HepG2 (cell line): ENCODE measurements at regions of chr14 and their contacts with region 1.

Region 1: GRCh38 chr14:38867561-38868150 is 235.4 kb downstream of the SEC23A start:
- DNase-seq: peak; percentile 91
- ATAC-seq: peak; percentile 92
- H3K4me3 ChIP-seq: no peak overlapping the region
- H3K27ac ChIP-seq: no peak overlapping the region
- H3K4me1 ChIP-seq: peaks cover 19% of the 10 kb centered on the region
- H3K27me3 ChIP-seq: peaks cover 0 to 9% of the 10 kb centered on the region in 2 experiments; a peak in 2 of 5 replicates
- CTCF ChIP-seq: peak; percentile 98
- EP300 ChIP-seq: no peak
- POLR2A ChIP-seq: no peak
- RAD21 ChIP-seq: peak; percentile 84

Region 2: GRCh38 chr14:37903343-37904191 is 964.1 kb before region 1 on chr14:
- CTCF ChIA-PET with region 1: interaction called, 4 read pairs
- POLR2A ChIA-PET with region 1: no interaction called
- in situ Hi-C with region 1: loop called (anchors 10 kb)
- intact Hi-C with region 1: loop called (anchors 1 kb)
- DNase-seq: peak; percentile 75
- ATAC-seq: peak; percentile 90
- H3K4me3 ChIP-seq: peak overlapping the region in 2 of 3 experiments; percentile 1 to 29; a peak in 2 of 6 replicates
- H3K27ac ChIP-seq: no peak overlapping the region
- H3K4me1 ChIP-seq: peaks cover 8% of the 10 kb centered on the region
- H3K27me3 ChIP-seq: no peaks in the 10 kb centered on the region
- CTCF ChIP-seq: peak; percentile 79
- EP300 ChIP-seq: no peak
- POLR2A ChIP-seq: no peak
- RAD21 ChIP-seq: peak; percentile 69

Region 3: GRCh38 chr14:38197001-38197783 is 670.5 kb before region 1 on chr14:
- CTCF ChIA-PET with region 1: no interaction called
- POLR2A ChIA-PET with region 1: no interaction called
- in situ Hi-C with region 1: no loop called
- intact Hi-C with region 1: loop called (anchors 1 kb)
- DNase-seq: no peak
- ATAC-seq: peak; percentile 57; the same call in 2 of the 3 replicates
- H3K4me3 ChIP-seq: no peak overlapping the region
- H3K27ac ChIP-seq: no peak overlapping the region
- H3K4me1 ChIP-seq: no peaks in the 10 kb centered on the region
- H3K27me3 ChIP-seq: no peaks in the 10 kb centered on the region; a peak in 1 of 5 replicates
- CTCF ChIP-seq: peak; percentile 29; the same call in 1 of the 2 replicates
- EP300 ChIP-seq: no peak
- POLR2A ChIP-seq: no peak
- RAD21 ChIP-seq: no peak

Region 4: GRCh38 chr14:38605193-38606114 is 262.2 kb before region 1 on chr14:
- CTCF ChIA-PET with region 1: no interaction called
- POLR2A ChIA-PET with region 1: no interaction called
- in situ Hi-C with region 1: loop called (anchors 10 kb)
- intact Hi-C with region 1: loop called (anchors 1 kb)
- DNase-seq: peak; percentile 79
- ATAC-seq: peak; percentile 83
- H3K4me3 ChIP-seq: peak overlapping the region in 2 of 3 experiments; percentile 1 to 11; a peak in 2 of 6 replicates
- H3K27ac ChIP-seq: peak overlapping the region; percentile 14
- H3K4me1 ChIP-seq: peaks cover 24% of the 10 kb centered on the region
- H3K27me3 ChIP-seq: no peaks in the 10 kb centered on the region
- CTCF ChIP-seq: peak; percentile 56
- EP300 ChIP-seq: peak in 1 of 2 experiments; percentile 92; a peak in 2 of 4 replicates
- POLR2A ChIP-seq: no peak
- RAD21 ChIP-seq: peak; percentile 10; the same call in 1 of the 2 replicates

Region 5: GRCh38 chr14:38848243-38848935 is 19.3 kb before region 1 on chr14:
- CTCF ChIA-PET with region 1: no interaction called
- POLR2A ChIA-PET with region 1: no interaction called
- in situ Hi-C with region 1: no loop called
- intact Hi-C with region 1: no loop called
- DNase-seq: no peak
- ATAC-seq: no peak
- H3K4me3 ChIP-seq: no peak overlapping the region
- H3K27ac ChIP-seq: no peak overlapping the region
- H3K4me1 ChIP-seq: no peaks in the 10 kb centered on the region
- H3K27me3 ChIP-seq: no peaks in the 10 kb centered on the region
- CTCF ChIP-seq: no peak
- EP300 ChIP-seq: no peak
- POLR2A ChIP-seq: no peak
- RAD21 ChIP-seq: no peak

Region 6: DNA sequence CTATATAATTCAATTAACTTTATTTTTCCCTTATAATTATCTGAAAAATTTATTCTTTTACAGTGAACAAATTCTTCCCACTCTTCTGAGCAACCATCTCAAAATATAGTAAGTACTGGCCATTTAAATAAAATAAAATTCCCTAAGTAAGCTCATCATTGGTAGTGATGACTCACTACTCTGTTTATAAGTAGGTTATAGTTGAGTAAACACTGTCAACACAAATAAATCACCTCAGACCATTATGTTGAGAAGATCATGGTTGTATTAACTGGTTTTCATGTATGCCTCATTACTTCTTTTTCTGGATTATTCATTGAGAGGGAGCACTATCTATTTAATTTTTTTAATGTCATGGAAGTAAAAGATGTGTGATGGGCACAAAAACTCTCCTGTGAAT is 14.9 kb after region 1 on chr14:
- CTCF ChIA-PET with region 1: no interaction called
- POLR2A ChIA-PET with region 1: no interaction called
- in situ Hi-C with region 1: no loop called
- intact Hi-C with region 1: loop called (anchors 2 kb)
- DNase-seq: no peak
- ATAC-seq: no peak
- H3K4me3 ChIP-seq: no peak overlapping the region
- H3K27ac ChIP-seq: no peak overlapping the region
- H3K4me1 ChIP-seq: peaks cover 33% of the 10 kb centered on the region
- H3K27me3 ChIP-seq: no peaks in the 10 kb centered on the region
- CTCF ChIP-seq: no peak
- EP300 ChIP-seq: no peak
- POLR2A ChIP-seq: no peak
- RAD21 ChIP-seq: no peak